ENCODE measurements at regions of chr17 and their contacts with region 1.

Region 1: GRCh38 chr17:50707289-50708049 is at the start of gene ANKRD40:
- DNase-seq: peak; percentile 94
- ATAC-seq: peak; percentile 76
- H3K4me3 Mint-ChIP-seq: peak within 1 kb of the TSS; percentile 91
- H3K27ac Mint-ChIP-seq: peak within 1 kb of the TSS; percentile 99
- H3K4me1 Mint-ChIP-seq: peaks cover 46% of the 10 kb centered on the region
- H3K27me3 Mint-ChIP-seq: no peaks in the 10 kb centered on the region
- total RNA-seq, gene ANKRD40: 28.0 to 29.8 TPM

Region 2: GRCh38 chr17:50361561-50362480 is 345.6 kb before region 1 on chr17:
- CTCF ChIA-PET with region 1: no interaction called
- POLR2A ChIA-PET with region 1: interaction called, 13 read pairs
- intact Hi-C with region 1: no loop called
- DNase-seq: peak; percentile 76
- ATAC-seq: peak; percentile 95
- H3K4me3 Mint-ChIP-seq: no peak overlapping the region
- H3K27ac Mint-ChIP-seq: peak overlapping the region; percentile 80
- H3K4me1 Mint-ChIP-seq: peaks cover 8% of the 10 kb centered on the region
- H3K27me3 Mint-ChIP-seq: no peaks in the 10 kb centered on the region

Region 3: DNA sequence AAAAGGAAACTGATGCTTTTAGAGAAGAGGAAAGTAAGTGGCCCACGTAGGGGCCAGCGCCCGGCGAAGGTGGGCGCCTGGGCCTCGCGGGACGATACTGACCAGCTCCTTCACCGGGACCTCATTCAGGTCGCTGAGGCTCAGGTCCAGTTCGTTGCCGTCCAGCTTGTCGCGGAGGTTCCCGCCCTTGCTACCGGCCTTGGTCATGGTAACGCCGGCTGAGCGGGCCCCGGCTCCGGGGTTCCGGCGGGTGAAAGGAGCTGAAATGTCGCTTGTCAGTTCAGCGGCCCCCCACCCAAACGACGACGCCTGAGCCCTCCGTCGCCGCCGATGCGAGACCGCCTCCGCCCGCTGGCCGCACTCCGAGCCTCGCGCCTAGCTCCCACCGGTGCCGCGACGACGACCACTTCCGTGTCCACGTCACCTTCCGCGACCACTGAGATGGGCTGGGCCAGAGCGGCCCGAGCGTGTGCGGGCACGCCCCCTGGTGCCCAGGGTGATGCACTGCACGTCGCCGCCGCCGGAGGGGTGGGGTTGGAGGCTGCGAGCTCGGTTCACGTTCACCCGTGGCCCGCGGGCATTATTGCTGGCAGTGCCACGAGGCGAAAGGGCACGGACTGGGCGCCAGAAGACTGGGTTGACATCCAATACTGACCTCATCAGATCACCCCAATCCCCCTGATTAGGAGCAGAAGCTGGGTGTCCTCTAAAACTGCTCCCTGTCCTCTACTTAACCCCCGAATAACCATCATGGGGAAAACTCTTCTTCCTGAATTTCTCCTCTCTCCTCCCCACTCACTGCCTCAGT is 310.2 kb before region 1 on chr17 and contains the start of gene LRRC59:
- CTCF ChIA-PET with region 1: no interaction called
- POLR2A ChIA-PET with region 1: no interaction called
- intact Hi-C with region 1: loop called (anchors 1 to 2 kb)
- DNase-seq: peak; percentile 95
- ATAC-seq: peak; percentile 95
- H3K4me3 Mint-ChIP-seq: peak within 1 kb of the TSS; percentile 93
- H3K27ac Mint-ChIP-seq: peak within 1 kb of the TSS; percentile 88
- H3K4me1 Mint-ChIP-seq: peaks cover 33% of the 10 kb centered on the region
- H3K27me3 Mint-ChIP-seq: no peaks in the 10 kb centered on the region
- total RNA-seq, gene LRRC59: 74.4 to 82.7 TPM

Region 4: DNA sequence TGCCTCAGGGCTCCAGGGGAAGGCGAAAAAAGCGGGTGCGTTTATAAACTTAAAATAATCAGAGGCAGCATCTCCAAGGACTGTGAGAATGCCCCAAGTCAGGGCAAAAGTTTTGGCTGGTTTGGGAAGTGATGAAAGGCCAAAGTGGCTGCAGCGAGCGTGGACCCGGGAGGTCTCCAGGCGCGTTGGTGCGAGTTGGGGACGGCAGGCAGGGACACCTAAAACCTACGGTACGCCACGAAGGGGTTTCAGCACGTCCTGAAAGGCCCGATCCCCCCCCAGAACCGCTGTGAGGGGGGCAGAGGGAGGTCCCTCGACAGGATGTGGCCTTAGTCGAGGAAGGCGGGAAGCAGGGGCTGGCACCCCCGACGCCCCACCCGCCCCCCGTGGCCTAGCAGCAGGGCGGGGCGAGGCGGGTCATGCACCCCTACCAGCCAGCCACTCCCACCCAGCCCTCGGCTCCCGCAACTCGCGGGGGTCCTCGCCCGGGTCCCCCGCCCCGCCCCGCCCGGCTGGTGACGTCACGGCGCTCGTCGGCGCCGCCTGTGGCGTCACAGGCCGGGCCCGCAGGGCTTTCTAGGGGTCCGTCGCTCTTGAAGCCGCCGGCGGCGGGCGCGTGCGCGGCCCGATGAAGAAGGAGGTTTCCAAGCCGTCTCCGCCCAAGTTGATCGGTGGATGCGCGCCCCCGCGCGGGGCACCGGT is 199.4 kb before region 1 on chr17 and contains the start of gene MYCBPAP:
- CTCF ChIA-PET with region 1: no interaction called
- POLR2A ChIA-PET with region 1: no interaction called
- intact Hi-C with region 1: loop called in 1 of 2 experiments (anchors 1 kb)
- DNase-seq: peak; percentile 85
- ATAC-seq: peak; percentile 38
- H3K4me3 Mint-ChIP-seq: peak within 1 kb of the TSS; percentile 72
- H3K27ac Mint-ChIP-seq: peak within 1 kb of the TSS; percentile 77
- H3K4me1 Mint-ChIP-seq: peaks cover 34% of the 10 kb centered on the region
- H3K27me3 Mint-ChIP-seq: peaks cover 4% of the 10 kb centered on the region
- total RNA-seq, gene MYCBPAP: 1.4 to 1.8 TPM

Region 5: GRCh38 chr17:50719144-50719923 is 11.9 kb after region 1 on chr17 and contains the start of gene LUC7L3:
- CTCF ChIA-PET with region 1: interaction called, 10 read pairs
- POLR2A ChIA-PET with region 1: interaction called, 10 read pairs
- intact Hi-C with region 1: loop called (anchors 1 kb)
- DNase-seq: peak; percentile 97
- ATAC-seq: peak; percentile 89
- H3K4me3 Mint-ChIP-seq: peak within 1 kb of the TSS; percentile 87
- H3K27ac Mint-ChIP-seq: peak within 1 kb of the TSS; percentile 99
- H3K4me1 Mint-ChIP-seq: peaks cover 22% of the 10 kb centered on the region
- H3K27me3 Mint-ChIP-seq: no peaks in the 10 kb centered on the region
- total RNA-seq, gene LUC7L3: 112 to 120 TPM

Region 6: DNA sequence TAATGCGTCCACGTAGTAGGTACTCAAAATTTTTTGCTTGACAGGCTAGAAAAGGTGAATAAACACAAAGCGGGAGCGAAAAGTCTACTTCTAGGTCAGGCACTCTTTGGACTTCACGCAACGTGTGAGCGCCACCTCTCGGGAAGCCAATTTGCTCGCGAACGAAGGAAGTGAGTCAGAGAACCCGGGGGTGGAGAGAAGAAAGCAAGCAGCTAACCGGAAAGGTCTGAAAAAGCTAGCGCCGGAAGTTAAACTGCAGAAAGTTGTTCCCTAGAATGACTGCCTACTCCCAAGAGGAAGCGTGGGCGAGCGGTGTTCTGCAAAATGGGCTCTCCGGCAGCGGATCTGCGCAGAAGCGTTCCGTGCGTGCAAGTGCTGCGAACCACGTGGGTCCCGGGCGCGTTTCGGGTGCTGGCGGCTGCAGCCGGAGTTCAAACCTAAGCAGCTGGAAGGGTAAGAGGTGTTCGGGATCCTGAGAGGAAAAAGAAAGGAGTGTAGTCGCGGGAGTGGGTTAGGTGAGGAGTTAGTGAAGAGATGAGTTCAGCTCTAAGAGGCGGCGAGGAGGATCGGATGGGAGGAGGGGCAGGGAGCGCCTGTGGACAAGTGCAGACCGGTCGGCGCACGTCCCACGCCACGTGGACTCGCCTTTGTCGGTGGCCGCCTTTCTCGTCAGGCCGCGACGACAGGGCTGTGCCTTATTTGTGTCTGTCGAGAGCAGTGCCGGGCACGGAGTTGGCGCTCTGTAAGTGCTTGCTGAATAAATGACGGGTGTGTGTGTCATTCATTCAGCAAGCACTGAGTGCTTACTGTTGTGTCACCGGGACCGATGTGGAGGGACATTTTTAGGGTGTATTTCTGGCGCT is 446.0 kb after region 1 on chr17 and contains the start of gene NME1:
- CTCF ChIA-PET with region 1: no interaction called
- POLR2A ChIA-PET with region 1: no interaction called
- intact Hi-C with region 1: loop called in 1 of 2 experiments (anchors 1 kb)
- DNase-seq: peak; percentile 98
- ATAC-seq: peak; percentile 93
- H3K4me3 Mint-ChIP-seq: no peak within 1 kb of the TSS
- H3K27ac Mint-ChIP-seq: no peak within 1 kb of the TSS
- H3K4me1 Mint-ChIP-seq: peaks cover 8% of the 10 kb centered on the region
- H3K27me3 Mint-ChIP-seq: no peaks in the 10 kb centered on the region
- total RNA-seq, gene NME1: 293 to 310 TPM